Panc1 (cell line): ENCODE measurements at regions of chr21 and their contacts with region 1.

Region 1: GRCh38 chr21:17159697-17160096 is 353.1 kb upstream of the CXADR start:
- DNase-seq: no peak
- ATAC-seq: no peak
- H3K4me3 ChIP-seq: no peak overlapping the region
- H3K27ac ChIP-seq: no peak overlapping the region
- H3K4me1 ChIP-seq: no peaks in the 10 kb centered on the region
- H3K27me3 ChIP-seq: no peaks in the 10 kb centered on the region
- CTCF ChIP-seq: no peak

Region 2: DNA sequence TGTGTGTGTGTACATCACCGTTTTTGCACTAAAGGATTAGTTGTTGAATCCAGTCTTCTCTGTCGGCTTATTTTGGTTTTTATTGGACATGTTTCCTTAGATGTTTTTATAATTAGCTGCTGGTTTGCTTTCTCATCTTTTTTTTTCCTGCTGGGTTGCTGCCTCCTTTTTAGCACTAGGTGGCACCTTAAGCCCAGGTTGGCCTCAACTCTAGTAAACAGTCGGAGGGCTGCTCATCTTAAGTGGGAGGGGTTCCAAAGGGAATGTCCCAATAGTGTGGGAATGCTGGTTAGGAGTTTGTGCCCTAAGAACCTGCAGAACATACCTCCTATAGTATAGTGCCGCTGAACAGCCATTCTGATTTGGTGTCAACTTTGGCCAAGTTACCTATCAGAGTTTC is 217.0 kb before region 1 on chr21:
- CTCF ChIA-PET with region 1: no interaction called
- POLR2A ChIA-PET with region 1: no interaction called
- in situ Hi-C with region 1: no loop called
- intact Hi-C with region 1: no loop called
- DNase-seq: no peak
- ATAC-seq: no peak
- H3K4me3 ChIP-seq: no peak overlapping the region
- H3K27ac ChIP-seq: no peak overlapping the region
- H3K4me1 ChIP-seq: no peaks in the 10 kb centered on the region
- H3K27me3 ChIP-seq: no peaks in the 10 kb centered on the region
- CTCF ChIP-seq: peak; percentile 16

Region 3: GRCh38 chr21:17105953-17106352 is 53.7 kb before region 1 on chr21:
- CTCF ChIA-PET with region 1: no interaction called
- POLR2A ChIA-PET with region 1: no interaction called
- in situ Hi-C with region 1: no loop called
- intact Hi-C with region 1: no loop called
- DNase-seq: no peak
- ATAC-seq: no peak
- H3K4me3 ChIP-seq: no peak overlapping the region
- H3K27ac ChIP-seq: no peak overlapping the region
- H3K4me1 ChIP-seq: no peaks in the 10 kb centered on the region
- H3K27me3 ChIP-seq: no peaks in the 10 kb centered on the region
- CTCF ChIP-seq: no peak

Region 4: DNA sequence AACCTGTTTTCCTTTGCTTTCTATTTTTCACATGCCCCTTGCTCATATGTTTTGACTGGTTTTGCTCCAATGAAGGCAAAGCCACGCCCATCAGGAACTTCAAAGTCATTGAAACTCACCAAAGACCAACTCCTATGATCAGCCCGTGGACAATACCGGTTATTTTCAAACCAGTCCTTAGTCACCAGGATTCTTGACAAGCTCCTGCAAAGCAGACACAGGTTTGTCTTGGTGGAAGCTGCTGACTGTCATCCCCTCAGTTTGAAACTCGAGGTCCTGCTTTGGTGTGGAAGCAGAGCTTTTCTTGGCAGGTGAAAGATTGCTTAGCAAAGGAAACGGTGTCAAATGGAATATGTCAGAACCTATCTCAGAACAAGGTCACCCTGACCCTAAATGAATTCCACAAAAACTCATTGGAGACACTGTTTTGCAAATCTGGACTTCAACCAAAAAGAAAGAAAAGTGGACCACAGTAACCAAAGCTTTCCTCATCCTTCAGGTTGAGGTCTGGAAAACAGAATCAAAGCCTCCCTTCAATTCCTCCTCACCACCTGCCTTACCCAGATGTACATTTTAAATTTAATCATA is 31.5 kb before region 1 on chr21:
- CTCF ChIA-PET with region 1: no interaction called
- POLR2A ChIA-PET with region 1: no interaction called
- in situ Hi-C with region 1: no loop called
- intact Hi-C with region 1: no loop called
- DNase-seq: no peak
- ATAC-seq: no peak
- H3K4me3 ChIP-seq: no peak overlapping the region
- H3K27ac ChIP-seq: no peak overlapping the region
- H3K4me1 ChIP-seq: no peaks in the 10 kb centered on the region
- H3K27me3 ChIP-seq: no peaks in the 10 kb centered on the region
- CTCF ChIP-seq: no peak

Region 5: DNA sequence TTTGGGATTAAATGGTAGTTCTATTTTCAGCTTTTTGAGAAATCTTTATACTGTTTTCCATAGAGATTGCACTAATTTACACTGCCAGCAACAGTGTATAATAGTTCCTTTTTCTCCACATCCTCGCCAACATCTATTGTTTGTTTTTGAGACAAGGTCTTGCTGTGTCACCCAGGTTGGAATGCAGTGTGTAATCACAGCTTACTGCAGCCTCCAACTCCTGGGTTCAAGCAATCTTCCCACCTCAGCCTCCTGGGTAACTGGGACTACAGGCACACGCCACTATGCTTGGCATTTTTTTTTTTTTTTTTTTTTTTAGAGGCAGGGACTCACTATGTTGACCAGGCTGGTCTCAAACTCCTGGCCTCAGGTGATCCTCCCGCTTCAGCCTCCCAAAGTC is 188.7 kb after region 1 on chr21:
- CTCF ChIA-PET with region 1: no interaction called
- POLR2A ChIA-PET with region 1: interaction called, 13 read pairs
- in situ Hi-C with region 1: no loop called
- intact Hi-C with region 1: no loop called
- DNase-seq: no peak
- ATAC-seq: no peak
- H3K4me3 ChIP-seq: no peak overlapping the region
- H3K27ac ChIP-seq: no peak overlapping the region
- H3K4me1 ChIP-seq: no peaks in the 10 kb centered on the region
- H3K27me3 ChIP-seq: no peaks in the 10 kb centered on the region
- CTCF ChIP-seq: no peak